ENCODE measurements at regions of chr16 and their contacts with region 1.

Region 1: DNA sequence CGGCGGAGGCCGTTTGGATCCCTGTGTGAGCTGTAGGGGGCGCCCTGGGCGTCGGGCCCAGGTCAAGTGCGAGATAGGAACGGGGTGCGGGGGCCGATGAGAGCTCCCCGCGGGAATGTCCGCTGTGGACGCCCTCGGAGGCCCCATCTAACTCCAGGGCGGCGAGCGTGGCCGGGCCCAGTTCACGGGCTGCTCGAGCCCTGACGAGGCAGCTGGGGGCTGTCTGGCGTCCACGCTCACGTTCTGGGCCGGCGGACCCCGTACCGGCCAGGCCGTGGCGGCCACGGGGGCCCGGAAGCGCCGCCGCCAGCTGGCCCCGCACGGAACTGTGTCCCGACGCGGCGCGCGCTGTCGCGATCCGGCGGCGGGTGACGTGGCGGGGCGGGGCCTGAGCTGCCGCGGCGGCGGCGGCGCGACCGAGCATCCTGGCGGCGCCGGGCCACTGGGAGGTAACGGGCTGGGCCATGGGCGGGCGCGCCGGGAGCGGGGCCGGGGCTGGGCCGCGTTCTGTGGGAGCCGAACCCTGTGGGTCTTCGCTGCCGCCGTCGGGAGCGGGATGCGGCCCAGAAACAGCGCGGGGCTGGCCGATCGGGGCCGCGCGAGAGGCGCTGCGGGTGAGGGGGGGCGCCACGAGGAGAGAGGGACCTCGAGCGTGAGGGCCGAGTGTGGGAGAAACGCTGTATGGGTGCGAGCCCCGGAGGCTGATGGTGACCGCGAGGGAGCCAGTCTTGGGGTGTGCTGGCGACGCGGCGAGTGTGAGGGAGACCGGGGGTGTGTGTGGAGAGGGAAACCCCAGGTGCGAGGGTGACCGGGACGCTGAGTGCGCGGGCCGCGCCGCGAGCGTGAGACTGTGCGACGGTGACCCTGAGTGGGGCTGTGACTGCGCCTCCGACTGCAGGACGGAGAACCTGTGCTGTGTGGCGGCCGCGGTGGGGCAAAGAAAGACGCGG is at the start of gene SLC7A6:
- DNase-seq: peak; percentile 87
- H3K4me3 Mint-ChIP-seq: peak within 1 kb of the TSS; percentile 98
- H3K27ac Mint-ChIP-seq: peak within 1 kb of the TSS; percentile 93
- H3K4me1 Mint-ChIP-seq: peaks cover 48% of the 10 kb centered on the region
- H3K27me3 Mint-ChIP-seq: no peaks in the 10 kb centered on the region
- total RNA-seq, gene SLC7A6: 66.7 to 68.9 TPM

Region 2: GRCh38 chr16:68244903-68245853 is 19.2 kb before region 1 on chr16 and contains the start of gene PLA2G15:
- CTCF ChIA-PET with region 1: interaction called, 60 read pairs
- POLR2A ChIA-PET with region 1: interaction called, 11 read pairs
- DNase-seq: peak; percentile 96
- H3K4me3 Mint-ChIP-seq: peak within 1 kb of the TSS; percentile 96
- H3K27ac Mint-ChIP-seq: peak within 1 kb of the TSS; percentile 79
- H3K4me1 Mint-ChIP-seq: peaks cover 23% of the 10 kb centered on the region
- H3K27me3 Mint-ChIP-seq: peaks cover 1% of the 10 kb centered on the region
- total RNA-seq, gene PLA2G15: 7.4 to 7.5 TPM

Region 3: GRCh38 chr16:68289621-68290329 is 25.4 kb after region 1 on chr16:
- CTCF ChIA-PET with region 1: interaction called, 243 read pairs
- POLR2A ChIA-PET with region 1: interaction called, 64 read pairs
- DNase-seq: peak; percentile 71
- H3K4me3 Mint-ChIP-seq: peak overlapping the region; percentile 6
- H3K27ac Mint-ChIP-seq: peak overlapping the region; percentile 92
- H3K4me1 Mint-ChIP-seq: peaks cover 83% of the 10 kb centered on the region
- H3K27me3 Mint-ChIP-seq: no peaks in the 10 kb centered on the region

Region 4: DNA sequence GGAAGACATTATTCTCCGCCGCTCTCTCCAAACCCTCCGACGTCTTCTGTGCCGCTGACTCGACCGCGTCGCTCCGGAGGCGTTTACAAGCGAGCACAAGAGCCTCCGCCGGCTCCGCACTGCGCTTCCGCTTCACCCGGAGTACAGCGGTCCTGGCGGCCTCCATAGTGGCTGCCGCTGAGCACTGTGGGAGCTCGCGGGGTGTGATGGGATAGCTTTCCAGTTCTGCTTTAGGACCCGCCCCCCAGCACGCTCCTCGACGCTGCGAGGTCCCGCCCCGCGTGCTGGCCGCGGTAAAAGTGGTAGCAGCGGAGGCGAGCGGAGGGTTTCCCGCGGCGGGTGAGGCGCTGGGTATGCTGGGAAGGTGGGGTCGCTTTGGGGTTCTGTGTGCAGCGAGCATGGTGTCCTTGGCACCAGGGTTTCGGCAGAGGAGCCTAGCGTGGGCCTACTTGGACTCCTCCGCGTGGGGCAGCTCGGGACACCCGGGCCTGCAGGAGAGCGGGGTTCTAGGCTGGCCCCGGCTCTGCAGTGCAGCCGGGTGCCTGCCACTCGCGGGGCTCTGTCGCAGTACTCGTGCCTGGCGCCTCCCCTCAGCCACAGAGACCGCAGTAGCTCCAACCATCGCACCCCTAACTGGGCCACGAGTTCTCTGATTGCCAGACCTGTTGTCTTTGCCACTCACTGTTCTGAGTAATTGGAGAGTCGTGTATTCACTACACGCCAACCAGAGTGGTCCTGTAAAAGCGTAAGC is 46.5 kb after region 1 on chr16 and contains the starts of genes PRMT7 and SLC7A6OS:
- CTCF ChIA-PET with region 1: interaction called, 119 read pairs
- POLR2A ChIA-PET with region 1: interaction called, 58 read pairs
- DNase-seq: peak; percentile 95
- H3K4me3 Mint-ChIP-seq: peak within 1 kb of the TSS; percentile 84
- H3K27ac Mint-ChIP-seq: peak within 1 kb of the TSS; percentile 96
- H3K4me1 Mint-ChIP-seq: peaks cover 55% of the 10 kb centered on the region
- H3K27me3 Mint-ChIP-seq: no peaks in the 10 kb centered on the region
- total RNA-seq, gene PRMT7: 50.4 to 52.2 TPM
- total RNA-seq, gene SLC7A6OS: 30.4 to 31.2 TPM

Region 5: DNA sequence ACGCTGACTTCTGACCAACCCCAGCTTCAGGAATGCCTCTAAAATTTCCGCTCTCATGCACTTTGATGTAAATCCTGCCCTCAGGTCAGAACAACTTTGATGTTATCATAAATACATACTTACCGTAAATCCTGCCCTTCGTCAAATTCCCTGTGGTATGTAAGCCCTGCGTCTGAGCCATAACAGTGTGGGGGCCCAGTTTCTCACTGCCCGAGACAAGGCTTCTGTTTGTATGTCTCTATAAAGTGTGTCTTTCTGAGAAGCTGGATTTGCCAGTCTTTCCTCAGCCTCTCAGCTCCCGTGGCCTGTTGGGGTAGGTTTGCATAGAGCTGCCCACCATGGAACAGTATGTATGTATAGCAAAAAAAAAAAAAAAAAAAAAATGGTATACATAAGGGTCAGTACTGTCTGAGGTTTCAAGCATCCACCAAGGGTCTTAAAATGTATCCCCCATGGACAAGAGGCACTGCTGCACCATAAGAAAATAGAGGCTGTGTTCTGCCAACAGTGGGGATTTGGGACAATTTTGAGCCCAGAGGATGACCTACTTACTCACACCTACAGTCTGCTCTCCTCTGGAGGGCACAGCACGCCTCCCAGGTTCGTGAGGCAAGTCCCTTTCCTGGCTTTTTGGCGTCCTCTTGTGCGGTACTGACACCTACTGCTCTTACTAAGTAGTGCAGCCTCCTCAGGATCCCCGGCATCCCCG is 63.9 kb after region 1 on chr16:
- CTCF ChIA-PET with region 1: interaction called, 285 read pairs
- POLR2A ChIA-PET with region 1: interaction called, 27 read pairs
- DNase-seq: peak; percentile 82
- H3K4me3 Mint-ChIP-seq: no peak overlapping the region
- H3K27ac Mint-ChIP-seq: no peak overlapping the region
- H3K4me1 Mint-ChIP-seq: peaks cover 19% of the 10 kb centered on the region
- H3K27me3 Mint-ChIP-seq: no peaks in the 10 kb centered on the region